Gastrocnemius medialis (tissue), 4 donors: ENCODE measurements at regions of chr1 and their contacts with region 1.

Region 1: GRCh38 chr1:70221241-70222121 is at the start of gene SRSF11:
- DNase-seq: peak; percentile 93 to 95
- ATAC-seq: peak; percentile 96 to 97
- H3K4me3 ChIP-seq: peak within 1 kb of the TSS; percentile 68 to 97 (median 82)
- H3K27ac ChIP-seq: peak within 1 kb of the TSS; percentile 92 to 99 (median 96)
- H3K4me1 ChIP-seq: peaks cover 43 to 54% of the 10 kb centered on the region in 2 donors
- H3K27me3 ChIP-seq: no peaks in the 10 kb centered on the region
- CTCF ChIP-seq: peak in 3 of 5 experiments; percentile 13 to 33 (median 20)
- POLR2A ChIP-seq: peak; percentile 88 to 93
- total RNA-seq, gene SRSF11: 42.4 to 135 (median 52.2) TPM

Region 2: GRCh38 chr1:70134148-70134547 is 87.3 kb before region 1 on chr1:
- in situ Hi-C with region 1: no loop called
- intact Hi-C with region 1: loop called (anchors 1 kb)
- DNase-seq: peak; percentile 39 to 62
- ATAC-seq: peak; percentile 96 to 98
- H3K4me3 ChIP-seq: no peak overlapping the region
- H3K27ac ChIP-seq: peak overlapping the region; percentile 81 to 89 (median 84)
- H3K4me1 ChIP-seq: peaks cover 17 to 21% of the 10 kb centered on the region in 2 donors
- H3K27me3 ChIP-seq: no peaks in the 10 kb centered on the region
- CTCF ChIP-seq: no peak
- POLR2A ChIP-seq: no peak

Region 3: GRCh38 chr1:70205434-70206118 is 15.9 kb before region 1 on chr1 and contains the start of gene LRRC40:
- in situ Hi-C with region 1: no loop called
- intact Hi-C with region 1: loop called (anchors 1 kb)
- DNase-seq: peak; percentile 92 to 94
- ATAC-seq: peak; percentile 97
- H3K4me3 ChIP-seq: peak within 1 kb of the TSS; percentile 71 to 92 (median 82)
- H3K27ac ChIP-seq: peak within 1 kb of the TSS; percentile 88 to 95 (median 92)
- H3K4me1 ChIP-seq: peaks cover 53 to 57% of the 10 kb centered on the region in 2 donors
- H3K27me3 ChIP-seq: no peaks in the 10 kb centered on the region
- CTCF ChIP-seq: no peak
- POLR2A ChIP-seq: peak; percentile 66 to 73
- total RNA-seq, gene LRRC40: 6.5 to 10.5 (median 9.3) TPM

Region 4: GRCh38 chr1:70410604-70411359 is 189.3 kb after region 1 on chr1 and contains the start of gene CTH:
- in situ Hi-C with region 1: no loop called
- intact Hi-C with region 1: loop called (anchors 1 kb)
- DNase-seq: peak; percentile 97
- ATAC-seq: peak; percentile 92 to 95
- H3K4me3 ChIP-seq: peak within 1 kb of the TSS; percentile 67 to 85 (median 82)
- H3K27ac ChIP-seq: peak within 1 kb of the TSS; percentile 87 to 98 (median 97)
- H3K4me1 ChIP-seq: peaks cover 14 to 19% of the 10 kb centered on the region in 2 donors
- H3K27me3 ChIP-seq: no peaks in the 10 kb centered on the region
- CTCF ChIP-seq: peak in 1 of 5 experiments; percentile 18
- POLR2A ChIP-seq: peak; percentile 95 to 97
- total RNA-seq, gene CTH: 1.3 to 6.9 (median 2.5) TPM

Region 5: DNA sequence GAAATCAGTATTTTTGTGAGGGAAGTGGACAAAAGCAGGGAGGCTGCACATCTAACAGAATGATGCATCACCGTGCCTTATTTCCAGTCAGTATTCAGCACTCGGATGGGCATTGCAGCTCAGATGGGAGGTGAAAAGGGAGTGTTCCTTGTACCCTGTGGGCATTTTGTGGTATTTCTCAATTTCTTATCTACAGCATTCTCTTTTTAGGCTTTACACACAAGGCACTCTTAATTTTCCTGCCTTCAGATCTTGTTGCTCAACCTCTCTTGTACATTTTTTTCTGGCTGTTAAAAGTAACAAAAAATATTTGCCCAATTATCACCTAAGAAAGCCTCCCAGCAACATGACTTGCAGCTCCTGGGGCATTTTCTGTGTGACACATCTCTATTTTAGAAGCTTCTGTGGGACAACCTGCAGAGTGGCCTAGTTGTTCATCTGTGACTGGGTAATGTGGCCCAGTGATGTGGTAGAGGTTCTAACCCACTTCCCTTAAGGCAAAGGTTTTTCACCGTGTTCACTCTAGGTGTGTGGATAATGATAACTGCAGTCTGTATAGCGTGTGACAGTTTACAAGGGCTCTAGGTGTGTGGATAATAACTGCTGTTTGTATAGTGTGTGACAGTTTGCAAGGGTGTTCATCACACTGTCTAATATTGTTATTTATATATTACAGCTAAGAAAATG is 568.9 kb after region 1 on chr1:
- in situ Hi-C with region 1: no loop called
- intact Hi-C with region 1: no loop called
- DNase-seq: no peak
- ATAC-seq: no peak
- H3K4me3 ChIP-seq: no peak overlapping the region
- H3K27ac ChIP-seq: no peak overlapping the region
- H3K4me1 ChIP-seq: no peaks in the 10 kb centered on the region
- H3K27me3 ChIP-seq: no peaks in the 10 kb centered on the region
- CTCF ChIP-seq: no peak
- POLR2A ChIP-seq: no peak